ENCODE measurements at regions of chr7 and their contacts with region 1.

Region 1: GRCh38 chr7:76314042-76314721 is 11.7 kb downstream of the HSPB1 start:
- DNase-seq: peak; percentile 95 to 98 (median 96)
- ATAC-seq: peak; percentile 73
- H3K4me3 ChIP-seq: no peak overlapping the region
- H3K27ac ChIP-seq: no peak overlapping the region
- H3K4me1 ChIP-seq: peaks cover 25 to 42% of the 10 kb centered on the region in 2 experiments; a peak in 4 of 5 replicates
- H3K27me3 ChIP-seq: no peaks in the 10 kb centered on the region
- CTCF ChIP-seq: peak; percentile 100
- EP300 ChIP-seq: peak; percentile 72
- POLR2A ChIP-seq: no peak
- RAD21 ChIP-seq: peak; percentile 100

Region 2: GRCh38 chr7:75866489-75867389 is 447.4 kb before region 1 on chr7:
- CTCF ChIA-PET with region 1: interaction called, 5 read pairs
- POLR2A ChIA-PET with region 1: interaction called, 3 read pairs
- in situ Hi-C with region 1: no loop called
- intact Hi-C with region 1: loop called (anchors 5 kb)
- DNase-seq: peak; percentile 76 to 85 (median 81)
- ATAC-seq: peak; percentile 96
- H3K4me3 ChIP-seq: no peak overlapping the region
- H3K27ac ChIP-seq: peak overlapping the region; percentile 11; the same call in 1 of the 3 replicates
- H3K4me1 ChIP-seq: peaks cover 8 to 16% of the 10 kb centered on the region in 2 experiments; a peak in 4 of 5 replicates
- H3K27me3 ChIP-seq: no peaks in the 10 kb centered on the region
- CTCF ChIP-seq: peak; percentile 96 to 99 (median 99)
- EP300 ChIP-seq: peak; percentile 57
- POLR2A ChIP-seq: no peak
- RAD21 ChIP-seq: peak; percentile 98 to 99

Region 3: DNA sequence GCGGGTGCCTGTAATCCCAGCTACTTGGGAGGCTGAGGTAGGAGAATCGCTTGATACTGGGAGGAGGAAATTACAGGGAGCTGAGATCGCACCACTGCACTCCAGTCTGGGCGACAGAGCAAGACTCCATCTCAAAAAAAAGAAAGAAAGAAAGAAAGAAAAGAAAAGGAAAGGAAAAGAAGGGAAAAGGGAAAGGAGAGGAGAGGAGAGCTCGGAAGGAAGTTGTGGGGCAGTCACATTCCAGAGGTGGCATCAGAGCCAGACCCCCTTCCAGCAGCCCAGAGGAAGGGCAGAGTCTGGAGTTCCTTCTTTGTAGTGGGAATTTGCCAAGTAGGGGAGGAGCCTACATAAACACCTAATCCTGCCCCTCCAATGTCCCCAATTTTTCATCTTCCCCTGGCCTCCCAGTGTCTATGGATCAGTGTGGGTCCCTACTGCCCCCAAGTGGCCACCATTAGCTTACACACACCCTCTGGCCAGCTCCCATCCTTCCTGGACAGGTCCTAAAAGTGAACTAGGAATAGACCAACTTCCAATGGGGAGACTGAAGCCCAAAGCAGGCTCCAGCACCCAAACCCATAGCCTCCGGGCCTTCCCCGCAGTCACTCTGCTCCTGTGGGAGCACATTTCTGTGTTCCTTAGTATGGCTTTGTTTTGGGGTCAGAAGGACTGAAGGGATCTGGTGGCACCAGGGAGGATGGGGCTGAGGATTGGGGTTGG is 51.3 kb before region 1 on chr7:
- CTCF ChIA-PET with region 1: interaction called, 24 read pairs
- POLR2A ChIA-PET with region 1: interaction called, 4 read pairs
- in situ Hi-C with region 1: no loop called
- intact Hi-C with region 1: loop called (anchors 2 kb)
- DNase-seq: peak; percentile 69 to 86 (median 74)
- ATAC-seq: peak; percentile 83
- H3K4me3 ChIP-seq: no peak overlapping the region
- H3K27ac ChIP-seq: no peak overlapping the region
- H3K4me1 ChIP-seq: peaks cover 0 to 36% of the 10 kb centered on the region in 2 experiments; a peak in 4 of 5 replicates
- H3K27me3 ChIP-seq: peaks cover 4 to 25% of the 10 kb centered on the region in 2 experiments; a peak in 3 of 5 replicates
- CTCF ChIP-seq: peak; percentile 91 to 96 (median 95)
- EP300 ChIP-seq: no peak
- POLR2A ChIP-seq: no peak
- RAD21 ChIP-seq: peak; percentile 82 to 87

Region 4: DNA sequence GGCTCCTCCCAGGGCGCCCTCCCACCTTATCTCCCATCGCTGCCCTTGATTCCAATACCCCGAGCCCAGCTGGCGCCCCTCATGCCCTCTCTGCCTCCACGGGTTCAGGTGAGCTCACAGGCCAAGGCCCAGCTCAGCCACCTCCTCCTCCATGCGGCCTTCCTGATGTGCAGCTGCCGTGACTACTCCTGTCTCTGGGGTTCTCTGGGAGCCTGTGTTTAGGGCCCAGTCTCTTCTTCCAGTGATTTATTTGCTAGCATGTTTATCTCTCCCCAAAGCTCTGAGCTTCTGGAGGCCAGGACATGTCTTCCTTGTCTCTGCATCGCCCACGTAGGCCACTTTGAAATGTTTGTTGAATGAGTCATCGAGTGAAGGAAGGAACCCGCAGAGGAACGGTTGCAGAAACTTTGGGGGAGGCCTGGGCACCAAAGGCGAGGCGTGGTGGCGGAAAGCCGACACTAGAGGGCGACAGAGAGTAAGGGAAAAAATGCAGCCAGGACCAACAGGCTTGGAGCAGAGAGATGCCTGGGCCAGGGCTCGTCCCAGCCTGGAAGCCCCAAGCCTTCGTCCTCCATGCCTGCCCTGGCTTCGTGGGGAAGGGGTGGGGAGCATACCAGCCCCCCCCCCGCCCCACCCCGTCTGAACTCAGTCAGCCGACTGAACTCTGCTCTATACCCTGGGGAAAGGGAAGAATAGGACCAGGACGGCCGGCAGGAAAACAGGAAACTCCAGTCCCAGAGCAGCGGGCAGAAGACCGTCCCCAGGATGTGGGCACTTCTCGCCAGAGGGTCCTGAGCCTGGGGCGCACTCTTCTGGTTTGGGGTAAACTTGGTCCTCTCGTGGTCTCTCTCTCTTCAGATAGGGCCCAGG is 22.6 kb before region 1 on chr7:
- CTCF ChIA-PET with region 1: interaction called, 111 read pairs
- POLR2A ChIA-PET with region 1: interaction called, 5 read pairs
- in situ Hi-C with region 1: no loop called
- intact Hi-C with region 1: loop called (anchors 1 kb)
- DNase-seq: peak; percentile 90 to 96 (median 90)
- ATAC-seq: peak; percentile 93
- H3K4me3 ChIP-seq: no peak overlapping the region
- H3K27ac ChIP-seq: peak overlapping the region; percentile 38; the same call in 1 of the 3 replicates
- H3K4me1 ChIP-seq: peaks cover 23 to 35% of the 10 kb centered on the region in 2 experiments
- H3K27me3 ChIP-seq: no peaks in the 10 kb centered on the region; a peak in 1 of 5 replicates
- CTCF ChIP-seq: peak; percentile 97 to 99 (median 99)
- EP300 ChIP-seq: peak; percentile 89
- POLR2A ChIP-seq: no peak
- RAD21 ChIP-seq: peak; percentile 97

Region 5: DNA sequence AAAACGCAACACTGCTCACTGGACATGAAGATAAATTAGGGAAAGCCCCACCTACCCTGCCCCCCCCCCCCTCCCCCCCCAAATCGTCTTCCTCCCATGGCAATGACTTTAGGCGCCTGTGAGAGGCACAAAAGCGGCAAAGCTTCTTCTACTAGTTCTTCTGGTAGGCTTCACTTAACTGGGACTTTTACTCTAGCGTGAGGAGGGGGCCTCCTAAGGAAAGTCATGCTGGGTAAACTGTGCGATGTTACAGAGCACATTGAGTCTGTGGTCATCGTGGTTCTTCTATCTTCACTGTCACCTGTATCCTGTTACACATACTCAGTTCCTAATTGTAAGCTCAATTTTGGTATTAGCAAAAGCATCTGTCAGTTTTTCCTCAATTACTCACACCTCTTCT is 13.4 kb after region 1 on chr7:
- CTCF ChIA-PET with region 1: interaction called, 3 read pairs
- POLR2A ChIA-PET with region 1: interaction called, 11 read pairs
- in situ Hi-C with region 1: no loop called
- intact Hi-C with region 1: no loop called
- DNase-seq: peak in 3 of 4 experiments; percentile 51 to 59 (median 56)
- ATAC-seq: peak; percentile 41
- H3K4me3 ChIP-seq: no peak overlapping the region
- H3K27ac ChIP-seq: peak overlapping the region; percentile 33; the same call in 2 of the 3 replicates
- H3K4me1 ChIP-seq: peaks cover 10 to 18% of the 10 kb centered on the region in 2 experiments
- H3K27me3 ChIP-seq: no peaks in the 10 kb centered on the region
- CTCF ChIP-seq: no peak
- EP300 ChIP-seq: peak; percentile 36; the same call in 1 of the 2 replicates
- POLR2A ChIP-seq: no peak
- RAD21 ChIP-seq: no peak